GM10248 (cell line): ENCODE measurements at regions of chr11 and their contacts with region 1.

Region 1: GRCh38 chr11:131910523-131911387 is 540.3 kb downstream of the NTM start:
- DNase-seq: peak; percentile 29
- CTCF ChIP-seq: no peak

Region 2: GRCh38 chr11:131792243-131792642 is 118.5 kb before region 1 on chr11:
- CTCF ChIA-PET with region 1: no interaction called
- POLR2A ChIA-PET with region 1: no interaction called
- DNase-seq: no peak
- CTCF ChIP-seq: no peak

Region 3: GRCh38 chr11:131893103-131893890 is 17.5 kb before region 1 on chr11:
- CTCF ChIA-PET with region 1: interaction called, 12 read pairs
- POLR2A ChIA-PET with region 1: no interaction called
- DNase-seq: peak; percentile 70
- CTCF ChIP-seq: no peak

Region 4: GRCh38 chr11:131944736-131945135 is 34.0 kb after region 1 on chr11:
- CTCF ChIA-PET with region 1: no interaction called
- POLR2A ChIA-PET with region 1: no interaction called
- DNase-seq: no peak
- CTCF ChIP-seq: no peak

Region 5: DNA sequence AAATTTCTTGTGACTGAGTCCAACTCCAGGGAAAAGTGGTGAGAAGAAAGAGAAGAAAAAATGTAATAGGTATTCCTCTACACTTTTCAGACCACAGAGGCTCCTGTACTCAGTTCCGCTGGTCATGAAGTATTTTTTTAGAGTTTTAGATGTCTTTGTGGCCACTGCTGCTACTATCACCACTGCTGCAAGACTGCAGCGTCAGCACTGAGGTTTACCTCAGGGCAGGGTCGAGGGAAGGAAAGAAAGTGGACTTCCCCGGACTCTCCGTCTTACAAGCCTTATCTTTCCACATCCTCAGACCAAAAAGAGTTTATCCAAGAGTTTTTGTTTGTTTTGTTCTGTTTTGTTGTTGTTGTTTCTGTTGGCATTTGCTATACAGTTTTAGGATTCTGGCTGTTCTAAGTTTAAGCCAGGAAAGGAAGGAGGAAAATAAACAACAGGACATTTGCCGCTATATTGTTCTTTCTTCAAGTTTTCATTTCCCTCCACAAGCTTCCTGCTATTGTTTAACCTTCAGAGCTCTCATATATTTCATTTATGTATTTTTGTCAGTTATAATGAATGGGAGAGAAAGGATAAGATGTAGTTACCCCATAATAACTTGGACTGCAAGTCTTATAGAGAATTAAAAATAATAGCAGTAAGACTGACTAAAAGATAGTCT is 379.0 kb after region 1 on chr11:
- CTCF ChIA-PET with region 1: no interaction called
- POLR2A ChIA-PET with region 1: no interaction called
- DNase-seq: no peak
- CTCF ChIP-seq: no peak